ENCODE measurements at regions of chr17 and their contacts with region 1.

Region 1: GRCh38 chr17:82751571-82752370 is at the start of gene TBCD:
- DNase-seq: peak; percentile 94
- H3K4me3 Mint-ChIP-seq: peak within 1 kb of the TSS; percentile 78
- H3K27ac Mint-ChIP-seq: peak within 1 kb of the TSS; percentile 18
- H3K4me1 Mint-ChIP-seq: peaks cover 24% of the 10 kb centered on the region
- H3K27me3 Mint-ChIP-seq: no peaks in the 10 kb centered on the region
- total RNA-seq, gene TBCD: 97.0 to 98.2 TPM

Region 2: GRCh38 chr17:82648166-82648668 is 103.6 kb before region 1 on chr17 and contains the start of gene WDR45B:
- CTCF ChIA-PET with region 1: no interaction called
- POLR2A ChIA-PET with region 1: no interaction called
- intact Hi-C with region 1: loop called (anchors 5 kb)
- DNase-seq: peak; percentile 94
- H3K4me3 Mint-ChIP-seq: peak within 1 kb of the TSS; percentile 82
- H3K27ac Mint-ChIP-seq: peak within 1 kb of the TSS; percentile 73
- H3K4me1 Mint-ChIP-seq: peaks cover 25% of the 10 kb centered on the region
- H3K27me3 Mint-ChIP-seq: no peaks in the 10 kb centered on the region
- total RNA-seq, gene WDR45B: 42.8 to 43.0 TPM

Region 3: GRCh38 chr17:82716203-82717010 is 35.4 kb before region 1 on chr17 and contains the start of gene FN3KRP:
- CTCF ChIA-PET with region 1: no interaction called
- POLR2A ChIA-PET with region 1: interaction called, 4 read pairs
- intact Hi-C with region 1: loop called (anchors 2 kb)
- DNase-seq: peak; percentile 93
- H3K4me3 Mint-ChIP-seq: peak within 1 kb of the TSS; percentile 90
- H3K27ac Mint-ChIP-seq: peak within 1 kb of the TSS; percentile 82
- H3K4me1 Mint-ChIP-seq: peaks cover 19% of the 10 kb centered on the region
- H3K27me3 Mint-ChIP-seq: no peaks in the 10 kb centered on the region
- total RNA-seq, gene FN3KRP: 36.7 to 40.5 TPM

Measured in activated CD4-positive, alpha-beta memory T cell treated with anti-CD3 and anti-CD28 coated beads for 36 hours (primary cell).